A549 (cell line): ENCODE measurements at regions of chr12 and their contacts with region 1.

Region 1: DNA sequence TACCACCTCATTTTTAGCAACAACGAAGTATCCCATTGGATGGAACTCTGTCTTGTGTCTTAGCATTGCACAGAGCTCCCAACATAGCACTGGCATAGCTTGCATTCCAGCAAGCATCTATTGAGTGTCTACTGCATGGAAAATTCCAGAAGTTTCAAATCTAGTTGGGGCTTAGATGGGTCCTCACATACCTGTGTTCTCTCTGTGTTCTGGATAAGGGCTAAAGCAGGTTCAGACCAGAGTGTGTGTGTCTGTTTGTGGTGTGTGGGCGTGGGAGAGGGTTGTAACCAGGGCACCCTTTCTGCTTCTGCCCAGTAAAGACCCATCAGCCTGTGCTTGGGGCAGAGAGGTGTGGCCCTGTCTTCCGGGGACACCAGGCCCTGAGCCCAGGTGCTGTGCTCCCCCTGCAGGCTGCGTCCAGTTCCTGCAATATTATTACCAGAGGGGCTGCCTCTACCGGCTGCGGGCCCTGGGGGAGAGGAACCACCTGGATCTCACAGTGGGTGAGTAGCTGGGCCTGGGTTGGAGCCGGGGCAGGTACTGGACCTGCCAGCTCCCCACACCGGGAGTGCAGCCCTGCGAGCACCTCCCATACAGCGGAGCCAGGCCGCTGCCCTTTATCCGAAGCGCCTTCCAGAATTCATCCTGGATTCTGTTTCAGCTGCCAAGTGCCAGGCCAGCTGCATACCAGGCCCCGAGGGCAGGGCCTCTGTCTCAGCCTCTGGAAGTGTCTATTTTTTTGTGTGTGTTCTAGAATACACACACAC is 20.3 kb downstream of the RHOF start:
- DNase-seq: peak; percentile 89 to 91
- ATAC-seq: peak; percentile 67 to 77
- H3K4me3 ChIP-seq: no peak overlapping the region
- H3K27ac ChIP-seq: peak overlapping the region; percentile 55 to 67; a peak in 5 of 6 replicates
- H3K4me1 ChIP-seq: peaks cover 44% of the 10 kb centered on the region
- CTCF ChIP-seq: peak; percentile 94
- EP300 ChIP-seq: no peak
- POLR2A ChIP-seq: no peak
- RAD21 ChIP-seq: peak; percentile 94 to 98

Region 2: GRCh38 chr12:121568971-121569751 is 204.0 kb before region 1 on chr12:
- CTCF ChIA-PET with region 1: no interaction called
- POLR2A ChIA-PET with region 1: no interaction called
- DNase-seq: no peak
- ATAC-seq: peak; percentile 66 to 77; a peak in 5 of 6 replicates
- H3K4me3 ChIP-seq: no peak overlapping the region
- H3K27ac ChIP-seq: no peak overlapping the region
- H3K4me1 ChIP-seq: no peaks in the 10 kb centered on the region
- CTCF ChIP-seq: no peak
- EP300 ChIP-seq: no peak
- POLR2A ChIP-seq: no peak
- RAD21 ChIP-seq: no peak

Region 3: GRCh38 chr12:121697098-121697698 is 76.0 kb before region 1 on chr12:
- CTCF ChIA-PET with region 1: interaction called, 509 read pairs
- POLR2A ChIA-PET with region 1: no interaction called
- DNase-seq: peak; percentile 54 to 70
- ATAC-seq: peak in 1 of 2 experiments; percentile 55; a peak in 3 of 6 replicates
- H3K4me3 ChIP-seq: no peak overlapping the region
- H3K27ac ChIP-seq: peak overlapping the region; percentile 4 to 27; a peak in 3 of 6 replicates
- H3K4me1 ChIP-seq: peaks cover 13% of the 10 kb centered on the region; the same call in 2 of the 3 replicates
- CTCF ChIP-seq: peak; percentile 83
- EP300 ChIP-seq: no peak
- POLR2A ChIP-seq: no peak
- RAD21 ChIP-seq: peak; percentile 88 to 90

Region 4: GRCh38 chr12:121712461-121713256 is 60.5 kb before region 1 on chr12 and contains the start of gene TMEM120B:
- CTCF ChIA-PET with region 1: interaction called, 29 read pairs
- POLR2A ChIA-PET with region 1: no interaction called
- DNase-seq: peak; percentile 70 to 75
- ATAC-seq: peak; percentile 78 to 81
- H3K4me3 ChIP-seq: peak within 1 kb of the TSS; percentile 69
- H3K27ac ChIP-seq: peak within 1 kb of the TSS; percentile 73 to 86
- H3K4me1 ChIP-seq: peaks cover 32% of the 10 kb centered on the region
- CTCF ChIP-seq: peak; percentile 11; the same call in 1 of the 3 replicates
- EP300 ChIP-seq: no peak
- POLR2A ChIP-seq: peak; percentile 97
- RAD21 ChIP-seq: no peak
- polyA plus RNA-seq, gene TMEM120B: 13.2 and 18.2 TPM in 2 replicates

Region 5: DNA sequence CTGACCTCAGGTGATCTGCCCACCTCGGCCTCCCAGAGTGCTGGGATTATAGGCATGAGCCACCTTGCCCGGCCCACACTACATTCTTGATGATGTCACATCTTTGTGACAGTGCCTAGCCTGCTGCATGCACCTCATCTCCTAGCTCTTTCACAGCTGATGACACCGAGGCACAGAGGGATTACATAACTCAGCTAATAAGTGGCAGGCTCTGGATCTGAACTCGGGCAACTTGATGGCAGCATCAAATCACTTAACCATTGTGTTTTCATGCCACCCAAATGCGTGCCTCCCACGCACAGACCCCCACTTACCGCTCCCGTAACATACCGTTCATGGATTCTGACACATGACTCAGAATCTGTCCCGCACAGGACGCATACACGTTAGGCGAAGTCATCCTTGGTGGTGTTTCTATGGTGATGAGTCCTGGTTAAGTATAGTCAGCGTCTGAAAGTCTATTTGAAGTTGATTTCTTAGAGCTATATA is 53.2 kb before region 1 on chr12:
- CTCF ChIA-PET with region 1: interaction called, 29 read pairs
- POLR2A ChIA-PET with region 1: no interaction called
- DNase-seq: peak in 1 of 2 experiments; percentile 66
- ATAC-seq: peak; percentile 73 to 76
- H3K4me3 ChIP-seq: no peak overlapping the region
- H3K27ac ChIP-seq: peak overlapping the region in 1 of 2 experiments; percentile 36; a peak in 2 of 6 replicates
- H3K4me1 ChIP-seq: peaks cover 21% of the 10 kb centered on the region
- CTCF ChIP-seq: no peak
- EP300 ChIP-seq: no peak
- POLR2A ChIP-seq: no peak
- RAD21 ChIP-seq: no peak

Region 6: DNA sequence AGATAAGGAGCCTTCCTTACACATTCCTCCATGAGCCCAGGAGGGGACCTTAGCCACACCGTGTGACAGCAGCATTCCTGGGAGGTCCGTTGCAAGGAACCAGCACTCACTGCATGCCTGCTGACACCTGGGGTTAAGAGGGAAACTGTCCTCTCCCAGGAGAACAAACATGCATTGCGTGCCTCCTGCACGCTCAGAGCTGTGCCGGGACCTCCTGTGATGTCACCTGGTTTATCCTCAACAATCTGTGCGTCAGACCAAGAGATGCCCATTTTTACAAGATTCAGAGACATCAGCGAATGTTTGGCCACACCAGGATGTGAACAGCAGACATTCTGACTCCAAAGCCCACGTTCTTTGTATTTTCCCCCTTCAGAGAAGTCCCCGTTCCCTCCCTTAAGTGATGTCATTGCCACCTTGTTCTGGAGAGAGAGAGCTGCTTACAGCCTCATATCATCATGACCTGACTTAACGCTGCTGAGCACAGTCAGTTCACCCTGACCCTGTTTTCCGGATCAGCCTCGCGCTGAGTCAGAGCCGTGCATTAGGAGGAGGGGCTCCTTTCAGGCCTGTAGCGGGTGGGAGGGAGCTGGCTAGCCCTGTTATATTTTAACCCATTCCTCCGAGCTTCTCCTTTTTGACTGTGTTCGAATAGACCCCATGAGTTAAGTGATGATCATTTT is 24.5 kb before region 1 on chr12:
- CTCF ChIA-PET with region 1: interaction called, 14 read pairs
- POLR2A ChIA-PET with region 1: no interaction called
- DNase-seq: peak; percentile 85 to 96
- ATAC-seq: peak; percentile 94 to 95
- H3K4me3 ChIP-seq: peak overlapping the region; percentile 13; the same call in 2 of the 3 replicates
- H3K27ac ChIP-seq: peak overlapping the region; percentile 87 to 88
- H3K4me1 ChIP-seq: peaks cover 23% of the 10 kb centered on the region
- CTCF ChIP-seq: no peak
- EP300 ChIP-seq: peak; percentile 45 to 86; a peak in 3 of 5 replicates
- POLR2A ChIP-seq: no peak
- RAD21 ChIP-seq: no peak

Region 7: GRCh38 chr12:121753844-121754264 is 19.3 kb before region 1 on chr12:
- CTCF ChIA-PET with region 1: interaction called, 2,657 read pairs
- POLR2A ChIA-PET with region 1: no interaction called
- DNase-seq: no peak
- ATAC-seq: no peak
- H3K4me3 ChIP-seq: no peak overlapping the region
- H3K27ac ChIP-seq: peak overlapping the region in 1 of 2 experiments; percentile 45; a peak in 1 of 6 replicates
- H3K4me1 ChIP-seq: peaks cover 13% of the 10 kb centered on the region
- CTCF ChIP-seq: no peak
- EP300 ChIP-seq: no peak
- POLR2A ChIP-seq: no peak
- RAD21 ChIP-seq: no peak

Region 8: GRCh38 chr12:121949648-121950397 is 176.6 kb after region 1 on chr12:
- CTCF ChIA-PET with region 1: no interaction called
- POLR2A ChIA-PET with region 1: no interaction called
- DNase-seq: peak in 1 of 2 experiments; percentile 79
- ATAC-seq: peak; percentile 93 to 96
- H3K4me3 ChIP-seq: no peak overlapping the region
- H3K27ac ChIP-seq: peak overlapping the region; percentile 46 to 51
- H3K4me1 ChIP-seq: peaks cover 11% of the 10 kb centered on the region
- CTCF ChIP-seq: no peak
- EP300 ChIP-seq: no peak
- POLR2A ChIP-seq: no peak
- RAD21 ChIP-seq: no peak